Activated CD4-positive, alpha-beta memory T cell treated with anti-CD3 and anti-CD28 coated beads, Interleukin-2, amount 10 ng/mL, durations not matched to agents 7 days and 5 days (primary cell): ENCODE measurements at regions of chr1 and their contacts with region 1.

Region 1: DNA sequence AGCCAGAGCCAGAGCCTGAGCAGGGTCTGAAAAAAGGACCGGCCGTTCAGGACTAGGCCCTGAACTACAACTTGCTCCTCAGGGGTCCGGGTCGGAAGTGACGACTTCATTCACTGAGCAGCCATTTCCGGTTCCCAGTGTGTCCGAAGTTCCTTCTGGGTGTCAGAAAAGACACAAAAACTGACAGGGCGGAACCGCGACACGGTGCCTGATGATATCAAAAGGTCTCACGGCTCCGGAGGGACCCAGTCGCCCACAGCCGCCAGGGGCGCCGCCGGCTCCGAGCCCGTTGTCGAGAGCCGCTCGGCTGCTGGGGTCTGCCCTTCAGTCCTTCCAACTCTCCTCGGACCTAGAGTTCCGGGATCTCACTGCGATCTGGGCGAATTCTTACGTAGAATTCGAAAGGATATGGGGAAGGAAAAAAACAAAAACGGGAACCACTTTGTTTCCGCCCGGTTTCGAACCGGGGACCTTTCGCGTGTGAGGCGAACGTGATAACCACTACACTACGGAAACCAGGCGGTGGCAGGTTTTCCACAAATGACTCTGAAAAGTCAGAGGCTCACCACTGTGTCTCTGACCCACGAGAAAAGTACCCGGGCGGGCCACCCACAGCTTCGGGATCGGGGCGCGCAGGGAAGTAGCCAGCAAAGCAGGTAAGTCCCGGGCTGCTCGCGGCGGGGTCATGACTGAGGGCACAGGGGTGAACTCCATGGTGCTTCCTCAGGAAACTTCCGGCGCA is 31.8 kb upstream of the CFAP126 start:
- DNase-seq: peak; percentile 92
- H3K4me3 Mint-ChIP-seq: peak overlapping the region; percentile 89
- H3K27ac Mint-ChIP-seq: peak overlapping the region; percentile 99
- H3K4me1 Mint-ChIP-seq: peaks cover 39% of the 10 kb centered on the region
- H3K27me3 Mint-ChIP-seq: no peaks in the 10 kb centered on the region

Region 2: DNA sequence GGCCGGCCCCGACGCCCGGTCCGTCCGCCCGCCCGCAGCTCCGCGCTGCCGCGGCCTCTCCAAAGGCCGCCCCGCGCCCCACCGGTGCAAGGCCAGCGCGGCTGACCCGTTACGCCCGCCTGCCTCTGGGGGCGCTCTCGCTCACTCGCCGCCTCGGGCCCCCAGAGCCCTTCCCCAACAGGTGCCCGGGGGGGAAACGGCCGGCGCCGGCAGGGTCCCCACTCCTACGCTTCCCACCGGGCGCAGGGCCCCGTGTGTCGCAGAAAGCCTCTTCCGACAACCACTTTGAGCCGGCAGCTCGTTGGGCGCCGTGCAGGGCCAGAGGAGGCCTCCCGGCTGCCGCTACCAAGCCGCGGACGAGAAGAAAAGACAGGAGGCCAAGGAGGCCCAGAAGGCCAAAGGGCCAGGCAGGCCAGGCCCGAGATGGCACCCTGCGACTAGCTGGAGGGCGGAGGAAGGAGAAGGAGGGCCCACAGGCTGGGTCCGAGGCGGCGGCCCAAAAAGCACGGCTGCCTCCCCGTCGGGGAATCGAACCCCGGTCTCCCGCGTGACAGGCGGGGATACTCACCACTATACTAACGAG is 41.0 kb after region 1 on chr1:
- CTCF ChIA-PET with region 1: interaction called, 10 read pairs
- POLR2A ChIA-PET with region 1: interaction called, 15 read pairs
- DNase-seq: peak; percentile 75
- H3K4me3 Mint-ChIP-seq: peak overlapping the region; percentile 87
- H3K27ac Mint-ChIP-seq: peak overlapping the region; percentile 84
- H3K4me1 Mint-ChIP-seq: peaks cover 18% of the 10 kb centered on the region
- H3K27me3 Mint-ChIP-seq: peaks cover 24% of the 10 kb centered on the region